PC-9 (cell line): ENCODE measurements at regions of chr5 and their contacts with region 1.

Region 1: GRCh38 chr5:28779161-28779754 is 1740.9 kb upstream of the CDH9 start:
- DNase-seq: no peak
- H3K4me3 ChIP-seq: no peak overlapping the region
- H3K27ac ChIP-seq: no peak overlapping the region
- H3K4me1 ChIP-seq: no peaks in the 10 kb centered on the region
- H3K27me3 ChIP-seq: no peaks in the 10 kb centered on the region
- CTCF ChIP-seq: peak; percentile 32

Region 2: DNA sequence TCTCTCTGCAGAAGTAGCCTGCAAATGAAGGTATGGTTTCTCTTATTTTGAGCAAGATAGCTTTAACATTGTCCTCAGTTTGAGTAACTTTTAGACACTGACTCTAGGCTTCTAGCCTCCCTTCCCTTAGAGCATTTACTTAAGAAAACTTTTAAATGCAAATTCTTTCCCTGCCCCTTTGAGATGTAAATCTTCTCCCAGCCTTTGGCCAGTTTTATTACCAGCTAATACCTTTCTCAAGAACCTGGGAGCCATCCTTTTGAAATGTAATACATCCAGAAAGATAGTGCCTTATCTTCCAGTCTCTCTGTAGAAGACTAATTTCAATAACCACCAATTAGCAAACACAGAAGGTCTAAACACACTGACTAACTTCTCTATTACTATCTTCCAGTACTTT is 1052.0 kb before region 1 on chr5:
- CTCF ChIA-PET with region 1: no interaction called
- POLR2A ChIA-PET with region 1: no interaction called
- intact Hi-C with region 1: no loop called
- DNase-seq: no peak
- H3K4me3 ChIP-seq: no peak overlapping the region
- H3K27ac ChIP-seq: no peak overlapping the region
- H3K4me1 ChIP-seq: no peaks in the 10 kb centered on the region
- H3K27me3 ChIP-seq: no peaks in the 10 kb centered on the region
- CTCF ChIP-seq: no peak

Region 3: GRCh38 chr5:28355831-28356230 is 423.4 kb before region 1 on chr5:
- CTCF ChIA-PET with region 1: no interaction called
- POLR2A ChIA-PET with region 1: no interaction called
- intact Hi-C with region 1: no loop called
- DNase-seq: no peak
- H3K4me3 ChIP-seq: no peak overlapping the region
- H3K27ac ChIP-seq: no peak overlapping the region
- H3K4me1 ChIP-seq: no peaks in the 10 kb centered on the region
- H3K27me3 ChIP-seq: no peaks in the 10 kb centered on the region
- CTCF ChIP-seq: no peak

Region 4: DNA sequence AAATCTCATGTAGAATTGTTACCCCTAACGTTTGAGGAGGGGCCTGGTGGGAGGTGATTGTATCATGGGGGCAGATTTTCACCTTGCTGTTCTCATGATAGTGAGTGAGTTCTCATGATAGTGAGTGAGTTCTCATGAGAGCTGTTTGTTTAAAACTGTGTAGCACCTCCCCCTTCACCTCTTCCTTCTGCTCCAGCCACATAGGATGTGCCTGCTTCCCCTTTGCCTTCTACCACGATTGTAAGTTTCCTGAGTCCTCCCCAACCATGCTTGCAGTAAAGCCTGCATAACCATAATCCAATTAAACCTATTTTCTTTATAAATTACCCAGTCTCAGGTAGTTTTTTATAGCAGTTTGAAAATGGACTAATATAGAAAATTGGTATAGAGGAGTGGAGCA is 42.8 kb after region 1 on chr5:
- CTCF ChIA-PET with region 1: no interaction called
- POLR2A ChIA-PET with region 1: no interaction called
- intact Hi-C with region 1: loop called (anchors 1 kb)
- DNase-seq: no peak
- H3K4me3 ChIP-seq: no peak overlapping the region
- H3K27ac ChIP-seq: no peak overlapping the region
- H3K4me1 ChIP-seq: no peaks in the 10 kb centered on the region
- H3K27me3 ChIP-seq: no peaks in the 10 kb centered on the region
- CTCF ChIP-seq: no peak

Region 5: GRCh38 chr5:28831042-28831441 is 51.8 kb after region 1 on chr5:
- CTCF ChIA-PET with region 1: no interaction called
- POLR2A ChIA-PET with region 1: interaction called, 15 read pairs
- intact Hi-C with region 1: loop called (anchors 1 kb)
- DNase-seq: no peak
- H3K4me3 ChIP-seq: no peak overlapping the region
- H3K27ac ChIP-seq: no peak overlapping the region
- H3K4me1 ChIP-seq: no peaks in the 10 kb centered on the region
- H3K27me3 ChIP-seq: no peaks in the 10 kb centered on the region
- CTCF ChIP-seq: no peak

Region 6: GRCh38 chr5:28896949-28897348 is 117.7 kb after region 1 on chr5:
- CTCF ChIA-PET with region 1: no interaction called
- POLR2A ChIA-PET with region 1: no interaction called
- intact Hi-C with region 1: loop called (anchors 10 kb)
- DNase-seq: no peak
- H3K4me3 ChIP-seq: no peak overlapping the region
- H3K27ac ChIP-seq: no peak overlapping the region
- H3K4me1 ChIP-seq: no peaks in the 10 kb centered on the region
- H3K27me3 ChIP-seq: no peaks in the 10 kb centered on the region
- CTCF ChIP-seq: peak; percentile 56